Astrocyte of the cerebellum (primary cell): ENCODE measurements at regions of chr7 and their contacts with region 1.

Region 1: DNA sequence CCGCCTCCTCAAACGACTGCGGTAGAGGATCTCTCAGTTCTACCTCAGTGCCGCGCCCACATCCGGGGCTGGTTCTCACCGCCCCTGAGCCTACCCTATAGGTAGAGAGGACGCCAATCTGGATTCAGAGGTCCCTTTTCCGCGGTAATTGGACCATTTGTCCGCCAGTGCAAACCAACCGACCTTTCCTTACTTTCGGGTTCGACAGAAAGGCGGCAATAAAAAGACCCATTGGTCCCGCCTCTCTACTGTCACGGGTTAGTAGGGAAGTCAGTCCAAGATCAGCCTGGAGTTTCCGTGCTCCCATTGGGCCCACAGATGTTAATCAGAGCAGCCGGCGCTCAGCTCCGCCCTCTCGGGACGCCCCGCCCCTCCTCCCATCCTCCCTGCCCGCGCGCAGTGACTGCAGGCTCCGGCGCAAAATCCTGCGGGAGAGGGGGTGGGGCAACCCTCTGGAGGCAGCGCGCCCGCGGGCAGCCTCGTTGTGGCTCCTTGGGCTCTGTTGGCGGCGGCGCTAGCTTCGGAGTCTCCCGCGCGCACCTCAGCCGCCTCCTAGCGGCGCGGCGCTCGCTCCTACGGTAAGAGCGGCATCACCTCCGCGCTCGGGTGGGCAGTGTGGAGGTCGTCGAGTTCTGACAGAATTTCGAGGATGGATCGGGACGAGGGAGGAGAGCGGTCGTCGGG is at the starts of genes PHTF2 and TMEM60:
- DNase-seq: peak; percentile 100
- H3K4me3 ChIP-seq: peak within 1 kb of the TSS; percentile 95
- CTCF ChIP-seq: peak; percentile 65

Region 2: GRCh38 chr7:77846317-77847092 is 48.0 kb after region 1 on chr7:
- in situ Hi-C with region 1: loop called (anchors 5 kb)
- DNase-seq: no peak
- H3K4me3 ChIP-seq: no peak overlapping the region
- CTCF ChIP-seq: no peak

Region 3: GRCh38 chr7:77858278-77858677 is 59.7 kb after region 1 on chr7:
- in situ Hi-C with region 1: no loop called
- DNase-seq: no peak
- H3K4me3 ChIP-seq: no peak overlapping the region
- CTCF ChIP-seq: no peak